Activated CD4-positive, alpha-beta memory T cell treated with anti-CD3 and anti-CD28 coated beads for 36 hours (primary cell): ENCODE measurements at regions of chr4 and their contacts with region 1.

Region 1: DNA sequence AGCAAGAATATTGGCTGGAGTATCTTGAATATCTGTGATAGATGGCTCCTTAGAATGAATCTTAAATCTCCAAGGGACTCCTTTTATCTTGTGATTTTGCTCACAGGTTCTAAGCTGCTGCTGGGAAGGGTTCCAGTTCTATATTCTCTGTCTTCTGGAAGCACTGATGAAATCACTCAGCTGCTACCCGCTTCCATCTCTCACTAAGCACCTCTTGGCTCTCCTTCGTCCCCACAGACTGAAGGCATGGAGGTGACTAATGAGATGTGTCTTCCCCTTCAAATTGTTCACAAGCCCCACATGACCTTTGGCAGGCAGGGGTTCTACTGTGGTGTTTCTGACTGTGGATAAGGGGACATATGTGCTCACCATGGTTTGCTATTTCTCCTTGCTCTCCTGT is 75.9 kb downstream of the C4orf51 start:
- DNase-seq: no peak
- H3K4me3 Mint-ChIP-seq: no peak overlapping the region
- H3K27ac Mint-ChIP-seq: peak overlapping the region; percentile 60
- H3K4me1 Mint-ChIP-seq: peaks cover 27% of the 10 kb centered on the region
- H3K27me3 Mint-ChIP-seq: peaks cover 6% of the 10 kb centered on the region

Region 2: GRCh38 chr4:145732895-145733880 is 22.6 kb before region 1 on chr4:
- CTCF ChIA-PET with region 1: no interaction called
- POLR2A ChIA-PET with region 1: no interaction called
- intact Hi-C with region 1: loop called (anchors 2 kb)
- DNase-seq: peak; percentile 92
- H3K4me3 Mint-ChIP-seq: peak overlapping the region; percentile 69
- H3K27ac Mint-ChIP-seq: peak overlapping the region; percentile 62
- H3K4me1 Mint-ChIP-seq: peaks cover 29% of the 10 kb centered on the region
- H3K27me3 Mint-ChIP-seq: peaks cover 6% of the 10 kb centered on the region